ENCODE measurements at regions of chr5 and their contacts with region 1.

Region 1: GRCh38 chr5:141691867-141692532 is 10.0 kb upstream of the ARAP3 start:
- DNase-seq: peak; percentile 80 to 98 (median 91)

Region 2: GRCh38 chr5:141914199-141914743 is 222.3 kb after region 1 on chr5:
- intact Hi-C with region 1: loop called (anchors 1 kb)
- DNase-seq: peak; percentile 24 to 94 (median 60)

Region 3: GRCh38 chr5:142145106-142145900 is 453.3 kb after region 1 on chr5:
- intact Hi-C with region 1: loop called (anchors 10 kb)
- DNase-seq: peak in 5 of 10 donors; percentile 36 to 55 (median 42)

Measured in posterior cingulate gyrus (tissue), 11 donors.